Dorsolateral prefrontal cortex (tissue), 120 donors: ENCODE measurements at regions of chr1 and their contacts with region 1.

Region 1: DNA sequence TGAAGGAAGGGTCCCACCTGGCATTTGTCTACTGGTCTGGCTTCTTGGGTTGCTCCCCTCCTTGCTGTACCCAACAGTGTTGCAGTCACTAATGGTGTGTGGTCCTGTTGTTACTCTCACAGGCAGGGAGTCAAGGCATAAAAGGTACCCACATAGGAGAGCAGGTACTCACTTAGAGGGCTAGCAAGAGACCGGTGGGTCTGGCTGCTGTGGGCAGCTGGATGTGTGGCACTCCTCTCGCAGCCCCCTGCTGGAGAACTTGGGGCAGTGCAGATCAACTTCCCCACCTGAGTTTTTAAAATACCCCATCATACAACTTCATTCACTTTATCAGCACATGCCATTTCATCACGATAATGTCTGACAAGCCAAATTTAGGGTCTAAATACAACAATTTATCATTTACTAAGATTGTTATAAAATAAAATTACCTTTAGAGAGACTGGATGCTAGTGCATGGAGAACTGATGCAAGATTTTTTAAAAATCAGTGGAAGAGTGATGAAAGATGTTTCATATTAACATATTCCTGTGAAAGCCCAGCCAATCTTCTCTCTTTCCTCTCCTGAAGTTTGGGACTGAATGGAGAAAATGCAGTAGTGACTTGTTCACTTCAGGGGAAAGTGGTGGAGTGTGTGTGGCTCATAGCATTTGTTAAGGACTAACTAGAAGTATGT is 42.8 kb downstream of the ACP6 start:
- DNase-seq: peak in 5 of 10 donors; percentile 27 to 57 (median 36)
- H3K4me3 ChIP-seq: no peak overlapping the region
- H3K27ac ChIP-seq: no peak overlapping the region
- H3K27me3 ChIP-seq: no peaks in the 10 kb centered on the region
- CTCF ChIP-seq: peak; percentile 72 to 96 (median 88)

Region 2: GRCh38 chr1:147273409-147274336 is 353.9 kb before region 1 on chr1:
- intact Hi-C with region 1: loop called in 1 of 2 experiments (anchors 10 kb)
- DNase-seq: peak in 2 of 10 donors; percentile 16 to 18
- H3K4me3 ChIP-seq: no peak overlapping the region
- H3K27ac ChIP-seq: peak overlapping the region in 9 of 59 donors; percentile 4 to 56 (median 32)
- H3K27me3 ChIP-seq: no peaks in the 10 kb centered on the region
- CTCF ChIP-seq: peak; percentile 59 to 92 (median 76)

Region 3: DNA sequence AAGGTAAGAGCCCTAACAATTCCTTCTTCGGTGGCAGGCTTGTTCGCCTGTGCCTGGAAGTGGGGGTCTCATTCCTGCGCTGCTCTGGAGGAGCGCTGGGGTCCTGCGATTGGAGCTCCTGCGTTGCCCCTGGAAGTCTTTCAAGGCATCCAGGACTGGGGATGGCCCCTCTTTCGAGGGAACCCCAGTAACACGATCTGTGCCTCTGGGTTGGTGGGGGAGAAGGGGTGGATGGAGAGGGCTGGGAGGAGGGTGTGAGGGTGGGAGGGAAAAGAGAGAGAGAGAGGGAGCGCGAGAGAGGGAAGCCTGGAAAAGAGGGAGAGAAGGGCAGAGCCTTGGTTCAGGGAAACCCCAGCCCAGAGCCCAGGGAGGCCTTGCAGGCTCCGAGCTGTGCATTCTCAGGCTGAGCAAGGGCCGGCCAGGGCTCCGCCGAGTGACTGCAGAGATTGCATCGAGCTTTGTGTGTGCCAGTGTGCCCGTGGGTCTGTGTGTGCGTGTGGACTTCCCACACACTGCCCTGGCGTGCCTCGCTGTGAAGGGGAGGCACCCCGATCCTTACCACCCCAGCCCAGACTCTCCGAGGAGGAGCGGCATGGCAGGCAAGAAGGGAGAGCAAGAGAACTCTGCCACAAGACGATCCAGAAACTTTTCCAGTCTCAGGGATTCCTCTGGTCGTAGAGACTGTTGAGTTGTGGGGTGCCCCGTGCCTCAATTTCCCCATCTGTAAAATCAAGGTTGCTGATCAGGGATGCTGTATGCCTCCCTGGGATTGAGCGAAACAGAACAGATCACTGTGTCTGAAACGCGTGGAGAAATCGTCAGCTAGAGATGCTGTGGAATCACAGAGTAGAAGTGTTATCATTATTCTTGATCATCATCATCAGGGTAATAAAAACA is 85.7 kb before region 1 on chr1:
- intact Hi-C with region 1: loop called in 1 of 2 experiments (anchors 5 kb)
- DNase-seq: peak; percentile 42 to 74 (median 60)
- H3K4me3 ChIP-seq: peak overlapping the region; percentile 54 to 88 (median 74)
- H3K27ac ChIP-seq: peak overlapping the region; percentile 68 to 97 (median 94)
- H3K27me3 ChIP-seq: no peaks in the 10 kb centered on the region
- CTCF ChIP-seq: peak in 2 of 56 donors; percentile 6

Region 4: DNA sequence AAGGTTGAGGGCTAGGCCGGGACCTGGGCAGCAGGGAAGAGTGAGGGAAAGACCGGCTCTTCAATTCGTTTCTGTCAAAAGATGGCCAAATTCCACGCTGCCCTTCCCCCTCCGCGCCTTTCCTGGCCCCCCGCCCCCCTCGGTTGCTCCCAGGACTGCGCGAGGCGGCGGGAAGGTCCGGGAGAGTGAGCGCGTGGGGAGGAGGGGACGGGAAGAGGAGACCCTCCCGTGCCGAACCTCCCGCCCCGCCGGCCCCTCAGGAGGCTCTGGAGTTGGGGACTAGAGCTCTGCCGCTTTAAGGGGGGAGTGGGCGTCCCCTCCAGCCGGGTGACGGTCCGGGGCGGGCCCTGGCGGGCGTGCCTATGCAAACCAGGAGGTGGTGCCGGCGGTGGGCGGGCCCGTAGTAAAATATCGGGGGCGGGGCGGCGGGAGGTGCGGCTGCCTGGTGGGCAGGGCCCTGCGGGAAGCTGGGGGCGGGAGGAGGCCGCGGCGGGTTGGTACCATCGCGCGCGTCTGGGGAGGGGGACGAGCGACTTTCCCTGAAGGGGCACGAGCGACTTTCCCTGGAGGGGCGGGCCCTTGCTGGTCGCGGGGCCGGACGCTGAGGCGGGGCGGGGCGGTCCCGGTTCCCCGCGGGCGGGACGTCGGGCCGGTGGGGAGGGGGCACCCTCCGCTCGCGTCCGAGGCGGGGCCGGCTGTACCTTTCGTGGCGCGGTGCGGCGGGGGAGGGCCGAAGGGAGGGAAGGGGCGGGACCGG is 28.0 kb before region 1 on chr1:
- intact Hi-C with region 1: loop called in 1 of 2 experiments (anchors 2 kb)
- DNase-seq: peak; percentile 95 to 98 (median 97)
- H3K4me3 ChIP-seq: peak overlapping the region; percentile 52 to 97 (median 84)
- H3K27ac ChIP-seq: peak overlapping the region; percentile 63 to 96 (median 90)
- H3K27me3 ChIP-seq: no peaks in the 10 kb centered on the region
- CTCF ChIP-seq: peak in 2 of 56 donors; percentile 4 to 11

Region 5: GRCh38 chr1:147611021-147611426 is 16.5 kb before region 1 on chr1:
- intact Hi-C with region 1: no loop called
- DNase-seq: no peak
- H3K4me3 ChIP-seq: no peak overlapping the region
- H3K27ac ChIP-seq: no peak overlapping the region
- H3K27me3 ChIP-seq: no peaks in the 10 kb centered on the region
- CTCF ChIP-seq: no peak

Region 6: GRCh38 chr1:147890177-147890790 is 262.7 kb after region 1 on chr1:
- intact Hi-C with region 1: no loop called
- DNase-seq: peak in 5 of 10 donors; percentile 12 to 54 (median 31)
- H3K4me3 ChIP-seq: no peak overlapping the region
- H3K27ac ChIP-seq: no peak overlapping the region
- H3K27me3 ChIP-seq: no peaks in the 10 kb centered on the region
- CTCF ChIP-seq: peak in 51 of 56 donors; percentile 16 to 68 (median 42)